ENCODE measurements at regions of chr11 and their contacts with region 1.

Region 1: DNA sequence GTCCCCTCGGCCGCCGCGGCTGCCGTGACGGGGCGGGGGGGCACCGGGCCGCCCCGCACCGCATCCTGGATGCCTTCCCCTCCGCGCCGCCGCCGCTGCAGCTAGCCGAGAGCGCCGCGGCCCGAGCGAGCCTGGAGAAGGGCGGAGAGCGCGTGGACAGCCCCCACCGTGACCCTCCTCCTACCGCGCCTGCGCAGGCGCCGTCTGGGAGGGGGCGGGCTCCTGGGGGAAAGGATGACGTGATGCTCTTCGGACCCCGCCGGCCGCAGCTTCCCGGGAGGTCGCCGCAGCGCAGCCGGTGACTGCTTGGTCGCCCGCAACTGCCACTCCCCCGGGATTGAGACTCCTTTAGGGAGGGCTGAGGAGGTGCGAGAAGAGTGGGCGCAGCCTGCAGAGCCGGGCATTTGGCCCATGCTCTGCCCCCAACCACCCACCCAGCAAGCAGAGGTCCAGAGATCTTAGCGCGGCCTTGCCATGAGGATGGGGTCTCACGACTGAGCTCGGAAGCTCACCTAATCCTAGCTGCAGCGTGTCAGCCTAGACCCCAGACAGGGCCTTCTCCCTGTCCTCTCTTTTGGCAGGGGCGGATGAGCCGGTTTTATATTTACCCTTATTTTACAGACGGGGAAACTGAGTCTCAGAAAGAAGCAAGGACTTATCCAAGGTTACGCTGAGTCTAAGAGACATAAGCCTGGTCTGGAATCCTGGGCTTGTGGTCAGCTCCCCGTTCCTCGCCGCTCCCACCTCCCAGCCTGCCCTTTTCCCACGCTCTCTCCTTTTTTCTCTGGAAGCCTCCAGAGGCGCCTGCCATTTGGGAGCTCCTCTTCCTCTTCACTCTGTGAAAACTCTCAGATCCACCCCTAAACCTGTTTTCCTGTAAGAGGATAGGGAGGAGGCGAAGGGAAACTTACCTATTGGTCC is at the start of gene DENND5A:
- DNase-seq: peak; percentile 90 to 91
- ATAC-seq: peak; percentile 92 to 96 (median 96)
- H3K4me3 ChIP-seq: peak within 1 kb of the TSS; percentile 71 to 99 (median 96)
- H3K27ac ChIP-seq: peak within 1 kb of the TSS; percentile 74 to 100 (median 98)
- H3K4me1 ChIP-seq: peaks cover 5 to 44% (median 35%) of the 10 kb centered on the region in 9 donors
- H3K27me3 ChIP-seq: no peaks in the 10 kb centered on the region
- CTCF ChIP-seq: peak in 2 of 9 donors; percentile 17 to 23
- total RNA-seq, gene DENND5A: 94.1 to 178 (median 122) TPM

Region 2: GRCh38 chr11:8948886-8949285 is 316.6 kb before region 1 on chr11:
- intact Hi-C with region 1: no loop called
- DNase-seq: no peak
- ATAC-seq: no peak
- H3K4me3 ChIP-seq: no peak overlapping the region
- H3K27ac ChIP-seq: no peak overlapping the region
- H3K4me1 ChIP-seq: no peaks in the 10 kb centered on the region
- H3K27me3 ChIP-seq: no peaks in the 10 kb centered on the region
- CTCF ChIP-seq: no peak

Region 3: DNA sequence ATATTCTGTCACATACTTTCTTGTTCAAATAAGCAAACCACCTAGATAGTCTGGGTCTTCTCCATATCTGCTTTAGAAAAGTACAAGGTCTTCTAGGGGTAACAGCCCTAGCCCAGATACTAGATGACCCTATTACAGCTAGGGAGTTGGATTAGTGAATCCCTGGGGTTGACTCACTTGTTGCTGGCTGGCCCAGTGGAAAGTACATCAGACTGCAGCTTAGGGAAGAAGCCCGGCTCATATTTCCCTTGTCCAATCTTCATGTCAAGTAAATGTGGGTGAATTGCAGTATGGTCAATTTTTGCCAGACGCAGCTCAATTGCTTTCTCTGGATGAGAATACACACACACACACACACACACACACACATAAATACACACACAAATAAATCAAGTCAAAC is 95.0 kb before region 1 on chr11:
- intact Hi-C with region 1: loop called in 1 of 10 experiments (anchors 10 kb)
- DNase-seq: no peak
- ATAC-seq: peak in 1 of 8 donors; percentile 48
- H3K4me3 ChIP-seq: no peak overlapping the region
- H3K27ac ChIP-seq: no peak overlapping the region
- H3K4me1 ChIP-seq: peaks cover 0 to 20% (median 0%) of the 10 kb centered on the region in 9 donors
- H3K27me3 ChIP-seq: no peaks in the 10 kb centered on the region
- CTCF ChIP-seq: no peak

Region 4: DNA sequence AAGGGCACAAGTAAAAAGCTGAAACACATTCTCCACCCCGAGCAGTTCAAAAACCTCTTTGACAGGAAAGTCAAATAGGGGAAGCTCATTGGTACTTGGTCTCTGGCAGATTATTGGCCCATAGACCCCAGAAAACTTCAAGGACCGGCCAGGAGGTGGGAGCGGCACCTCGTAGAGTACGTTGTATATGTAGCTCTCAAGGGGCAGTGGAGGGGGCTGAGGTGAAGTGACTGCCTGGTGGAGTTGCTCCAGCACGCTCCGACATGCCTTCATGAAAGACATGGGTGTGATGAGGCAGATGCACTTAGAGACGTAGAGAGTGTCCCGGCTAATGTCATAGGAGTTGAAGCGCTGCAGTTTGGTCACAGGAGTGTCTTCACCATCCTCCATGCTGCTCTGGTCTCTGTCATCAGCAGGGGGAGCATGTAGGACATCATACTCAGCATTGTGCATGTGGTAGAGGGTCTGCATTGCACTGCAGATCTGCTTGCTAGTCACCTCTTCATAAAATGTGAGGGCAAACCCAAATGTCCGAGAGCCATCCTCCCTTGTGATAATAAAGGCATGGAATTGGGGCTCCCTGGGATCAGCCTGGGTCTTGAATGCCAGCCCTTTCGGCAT is 61.7 kb before region 1 on chr11:
- intact Hi-C with region 1: loop called in 4 of 10 experiments (anchors 5 to 10 kb)
- DNase-seq: peak in 1 of 2 donors; percentile 12
- ATAC-seq: peak; percentile 40 to 75 (median 65)
- H3K4me3 ChIP-seq: no peak overlapping the region
- H3K27ac ChIP-seq: peak overlapping the region in 1 of 10 donors; percentile 77
- H3K4me1 ChIP-seq: peaks cover 3 to 78% (median 39%) of the 10 kb centered on the region in 9 donors
- H3K27me3 ChIP-seq: no peaks in the 10 kb centered on the region
- CTCF ChIP-seq: peak in 7 of 9 donors; percentile 8 to 55 (median 41)

Region 5: DNA sequence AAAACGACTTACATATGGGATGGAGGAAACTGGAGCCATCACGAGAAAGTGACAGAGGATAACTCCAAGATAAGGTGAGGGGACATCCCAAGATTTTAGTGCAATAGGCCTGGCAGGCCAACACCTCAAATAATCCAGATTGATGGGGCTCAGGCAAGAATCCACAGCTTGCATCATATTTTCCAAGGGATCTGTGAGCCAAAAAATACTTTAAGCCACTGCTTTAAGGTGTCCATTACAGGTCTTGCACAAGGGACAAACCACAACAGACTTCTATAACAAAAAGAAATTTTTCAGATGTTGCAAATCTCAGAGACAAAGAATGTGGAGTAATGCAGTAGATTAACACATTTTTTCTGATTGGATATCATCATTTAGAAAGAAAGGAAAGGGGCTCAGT is 45.9 kb before region 1 on chr11:
- intact Hi-C with region 1: loop called in 2 of 10 experiments (anchors 5 to 10 kb)
- DNase-seq: no peak
- ATAC-seq: peak in 5 of 8 donors; percentile 5 to 53 (median 40)
- H3K4me3 ChIP-seq: no peak overlapping the region
- H3K27ac ChIP-seq: peak overlapping the region in 7 of 10 donors; percentile 0 to 78 (median 45)
- H3K4me1 ChIP-seq: peaks cover 6 to 47% (median 26%) of the 10 kb centered on the region in 9 donors
- H3K27me3 ChIP-seq: no peaks in the 10 kb centered on the region
- CTCF ChIP-seq: no peak

Region 6: DNA sequence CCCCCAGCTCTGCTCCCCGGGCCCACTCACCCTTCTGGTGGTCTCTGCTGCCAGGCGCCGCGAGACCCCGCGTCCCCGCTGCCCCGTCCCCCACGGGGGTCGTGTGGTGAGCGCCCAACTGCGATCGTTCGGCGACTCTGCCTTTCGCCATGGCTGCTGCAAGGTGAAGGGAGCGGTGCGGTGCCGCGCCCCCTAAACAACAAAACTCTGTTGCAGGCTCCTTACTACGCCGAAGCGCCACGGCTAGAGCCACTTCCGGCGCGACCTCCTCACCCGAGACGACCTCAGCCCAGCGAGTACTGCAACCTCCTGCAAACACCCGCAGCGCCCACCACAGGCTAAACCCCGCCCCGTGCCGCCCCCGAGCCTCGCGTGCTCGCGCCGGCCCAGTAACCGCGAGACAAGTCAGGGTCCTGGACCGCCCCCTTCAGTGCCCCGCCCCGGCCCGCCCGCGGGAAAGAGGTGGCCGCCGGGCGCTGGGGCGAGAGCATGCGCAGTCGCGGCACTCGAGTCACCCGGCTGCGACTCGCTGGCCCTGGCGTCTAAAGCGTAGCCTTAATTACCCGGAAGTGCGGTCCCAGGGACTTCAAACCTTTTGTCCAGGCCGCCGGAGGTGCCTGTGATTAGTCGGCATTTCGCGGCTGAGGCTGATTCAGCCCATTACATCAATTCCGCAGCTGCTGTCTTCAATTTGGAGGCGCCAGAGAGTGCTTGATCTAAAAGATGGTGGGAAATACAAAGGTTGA is 49.0 kb after region 1 on chr11 and contains the start of gene TMEM41B:
- intact Hi-C with region 1: loop called in 1 of 10 experiments (anchors 5 kb)
- DNase-seq: peak; percentile 98 to 99
- ATAC-seq: peak; percentile 99 to 100 (median 100)
- H3K4me3 ChIP-seq: peak within 1 kb of the TSS; percentile 71 to 98 (median 88)
- H3K27ac ChIP-seq: peak within 1 kb of the TSS; percentile 49 to 94 (median 86)
- H3K4me1 ChIP-seq: peaks cover 0 to 29% (median 15%) of the 10 kb centered on the region in 9 donors
- H3K27me3 ChIP-seq: peaks cover 0 to 6% (median 0%) of the 10 kb centered on the region in 7 donors
- CTCF ChIP-seq: peak in 6 of 9 donors; percentile 10 to 43 (median 24)
- total RNA-seq, gene TMEM41B: 17.2 to 25.1 (median 20.8) TPM

Region 7: DNA sequence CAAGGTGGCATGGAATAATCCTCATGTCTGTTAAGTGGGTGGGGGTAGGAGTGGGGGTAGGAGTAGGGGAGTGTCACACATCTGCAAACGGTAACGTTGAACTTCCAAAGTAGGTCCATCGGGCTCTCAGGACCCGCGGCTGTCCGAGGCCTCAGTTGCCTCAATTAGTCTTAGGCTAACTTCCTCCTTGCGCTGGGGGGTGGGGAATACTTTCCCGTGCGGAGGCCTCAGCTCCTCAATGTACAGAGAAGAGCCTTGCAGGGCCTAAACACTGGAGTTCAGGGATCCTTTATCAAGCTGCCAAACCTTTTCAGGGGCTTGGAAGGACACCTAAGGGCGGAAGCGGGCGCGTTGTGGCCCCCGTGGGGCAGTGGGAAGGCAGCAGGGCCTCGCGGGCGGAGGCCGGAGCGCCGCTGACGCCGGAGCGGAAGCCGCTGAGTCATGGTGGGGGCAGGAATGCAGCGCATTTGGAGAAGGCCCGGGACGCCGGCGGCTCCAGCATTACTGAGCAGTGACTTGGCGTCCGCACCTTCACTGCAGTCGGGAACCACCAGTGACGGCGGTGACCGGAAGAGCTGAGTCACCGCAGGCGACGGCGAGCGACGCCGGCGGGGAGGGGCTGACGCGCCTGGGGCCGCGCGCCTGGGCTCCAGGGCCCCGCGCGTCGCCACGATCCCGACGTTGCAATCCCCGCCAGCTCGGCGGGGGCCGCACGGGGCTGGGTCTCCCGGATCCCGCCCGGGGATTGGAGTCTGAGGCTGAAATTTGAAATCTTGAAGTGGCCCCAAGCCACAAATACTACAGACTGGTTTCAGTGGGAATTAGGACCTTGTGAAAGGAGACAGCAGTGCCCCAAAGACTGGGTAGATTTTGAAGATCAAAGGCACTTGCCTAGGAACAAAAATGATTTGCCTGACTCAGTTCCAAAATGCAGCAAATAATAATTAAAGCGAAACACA is 98.8 kb after region 1 on chr11:
- intact Hi-C with region 1: loop called in 1 of 10 experiments (anchors 5 kb)
- DNase-seq: peak; percentile 95
- ATAC-seq: peak; percentile 97 to 99 (median 98)
- H3K4me3 ChIP-seq: peak overlapping the region in 9 of 10 donors; percentile 20 to 58 (median 50)
- H3K27ac ChIP-seq: peak overlapping the region; percentile 93 to 100 (median 98)
- H3K4me1 ChIP-seq: peaks cover 0 to 36% (median 15%) of the 10 kb centered on the region in 9 donors
- H3K27me3 ChIP-seq: no peaks in the 10 kb centered on the region
- CTCF ChIP-seq: peak in 1 of 9 donors; percentile 36

Region 8: GRCh38 chr11:9384535-9385303 is 119.2 kb after region 1 on chr11 and contains the start of gene IPO7:
- intact Hi-C with region 1: loop called in 1 of 10 experiments (anchors 2 kb)
- DNase-seq: peak; percentile 89 to 90
- ATAC-seq: peak; percentile 95 to 98 (median 97)
- H3K4me3 ChIP-seq: peak within 1 kb of the TSS; percentile 66 to 93 (median 88)
- H3K27ac ChIP-seq: peak within 1 kb of the TSS; percentile 85 to 98 (median 96)
- H3K4me1 ChIP-seq: peaks cover 4 to 50% (median 34%) of the 10 kb centered on the region in 9 donors
- H3K27me3 ChIP-seq: no peaks in the 10 kb centered on the region
- CTCF ChIP-seq: peak in 8 of 9 donors; percentile 7 to 56 (median 20)
- total RNA-seq, gene IPO7: 129 to 169 (median 146) TPM

Measured in heart right ventricle (tissue), 16 donors.